ENCODE measurements at regions of chr18 and their contacts with region 1.

Region 1: GRCh38 chr18:21444465-21445023 is 156.0 kb downstream of the ESCO1 start:
- DNase-seq: peak; percentile 18
- ATAC-seq: no peak
- H3K4me3 Mint-ChIP-seq: no peak overlapping the region
- H3K27ac Mint-ChIP-seq: no peak overlapping the region
- H3K4me1 Mint-ChIP-seq: no peaks in the 10 kb centered on the region
- H3K27me3 Mint-ChIP-seq: peaks cover 14% of the 10 kb centered on the region

Region 2: DNA sequence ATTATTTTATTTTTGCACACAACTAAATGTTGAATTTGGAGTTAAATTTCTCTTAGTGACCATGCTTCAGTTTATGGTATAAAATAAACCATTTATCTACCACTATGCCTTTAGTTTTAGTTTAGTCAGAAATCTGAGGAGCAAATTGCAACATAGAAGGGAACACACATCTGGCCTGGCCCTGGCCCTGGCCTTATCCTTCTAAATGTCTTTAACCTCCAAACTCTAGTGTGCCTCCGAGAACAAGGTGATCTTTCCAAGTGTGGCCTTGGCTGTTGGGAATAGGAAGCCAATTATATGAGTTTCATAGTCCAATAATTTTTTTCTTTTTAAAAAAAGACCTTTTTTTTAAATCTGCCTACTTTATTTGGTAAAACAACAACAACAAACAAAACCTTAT is 234.3 kb before region 1 on chr18:
- CTCF ChIA-PET with region 1: interaction called, 5 read pairs
- POLR2A ChIA-PET with region 1: no interaction called
- intact Hi-C with region 1: loop called in 1 of 2 experiments (anchors 5 kb)
- DNase-seq: no peak
- ATAC-seq: no peak
- H3K4me3 Mint-ChIP-seq: no peak overlapping the region
- H3K27ac Mint-ChIP-seq: no peak overlapping the region
- H3K4me1 Mint-ChIP-seq: no peaks in the 10 kb centered on the region
- H3K27me3 Mint-ChIP-seq: no peaks in the 10 kb centered on the region

Region 3: GRCh38 chr18:21330122-21330701 is 114.3 kb before region 1 on chr18:
- CTCF ChIA-PET with region 1: no interaction called
- POLR2A ChIA-PET with region 1: no interaction called
- intact Hi-C with region 1: loop called in 1 of 2 experiments (anchors 10 kb)
- DNase-seq: no peak
- ATAC-seq: no peak
- H3K4me3 Mint-ChIP-seq: no peak overlapping the region
- H3K27ac Mint-ChIP-seq: no peak overlapping the region
- H3K4me1 Mint-ChIP-seq: no peaks in the 10 kb centered on the region
- H3K27me3 Mint-ChIP-seq: peaks cover 4% of the 10 kb centered on the region

Region 4: DNA sequence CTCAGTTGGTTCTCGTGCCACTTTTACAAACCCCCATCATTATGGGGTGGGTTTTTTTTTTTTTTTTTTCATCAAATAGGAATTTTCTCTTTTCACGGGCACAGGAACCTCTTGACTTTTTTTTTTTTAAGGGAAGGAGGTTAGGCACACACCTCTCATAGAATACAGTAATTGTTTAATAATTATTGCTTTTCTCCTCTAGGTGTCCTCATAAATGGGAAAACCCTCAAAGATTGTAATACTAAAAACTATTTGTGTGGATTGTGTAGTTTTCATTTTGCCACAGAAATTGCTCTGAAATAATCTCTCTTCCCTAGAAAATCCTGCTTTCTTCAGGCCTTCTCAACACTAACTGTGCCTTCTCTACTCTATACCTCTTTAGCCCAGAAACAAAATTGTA is 55.3 kb before region 1 on chr18:
- CTCF ChIA-PET with region 1: no interaction called
- POLR2A ChIA-PET with region 1: no interaction called
- intact Hi-C with region 1: loop called in 1 of 2 experiments (anchors 10 kb)
- DNase-seq: no peak
- ATAC-seq: no peak
- H3K4me3 Mint-ChIP-seq: no peak overlapping the region
- H3K27ac Mint-ChIP-seq: no peak overlapping the region
- H3K4me1 Mint-ChIP-seq: no peaks in the 10 kb centered on the region
- H3K27me3 Mint-ChIP-seq: peaks cover 4% of the 10 kb centered on the region

Region 5: GRCh38 chr18:21496277-21496835 is 51.8 kb after region 1 on chr18:
- CTCF ChIA-PET with region 1: no interaction called
- POLR2A ChIA-PET with region 1: no interaction called
- intact Hi-C with region 1: loop called in 1 of 2 experiments (anchors 5 kb)
- DNase-seq: no peak
- ATAC-seq: no peak
- H3K4me3 Mint-ChIP-seq: no peak overlapping the region
- H3K27ac Mint-ChIP-seq: no peak overlapping the region
- H3K4me1 Mint-ChIP-seq: no peaks in the 10 kb centered on the region
- H3K27me3 Mint-ChIP-seq: no peaks in the 10 kb centered on the region

Region 6: DNA sequence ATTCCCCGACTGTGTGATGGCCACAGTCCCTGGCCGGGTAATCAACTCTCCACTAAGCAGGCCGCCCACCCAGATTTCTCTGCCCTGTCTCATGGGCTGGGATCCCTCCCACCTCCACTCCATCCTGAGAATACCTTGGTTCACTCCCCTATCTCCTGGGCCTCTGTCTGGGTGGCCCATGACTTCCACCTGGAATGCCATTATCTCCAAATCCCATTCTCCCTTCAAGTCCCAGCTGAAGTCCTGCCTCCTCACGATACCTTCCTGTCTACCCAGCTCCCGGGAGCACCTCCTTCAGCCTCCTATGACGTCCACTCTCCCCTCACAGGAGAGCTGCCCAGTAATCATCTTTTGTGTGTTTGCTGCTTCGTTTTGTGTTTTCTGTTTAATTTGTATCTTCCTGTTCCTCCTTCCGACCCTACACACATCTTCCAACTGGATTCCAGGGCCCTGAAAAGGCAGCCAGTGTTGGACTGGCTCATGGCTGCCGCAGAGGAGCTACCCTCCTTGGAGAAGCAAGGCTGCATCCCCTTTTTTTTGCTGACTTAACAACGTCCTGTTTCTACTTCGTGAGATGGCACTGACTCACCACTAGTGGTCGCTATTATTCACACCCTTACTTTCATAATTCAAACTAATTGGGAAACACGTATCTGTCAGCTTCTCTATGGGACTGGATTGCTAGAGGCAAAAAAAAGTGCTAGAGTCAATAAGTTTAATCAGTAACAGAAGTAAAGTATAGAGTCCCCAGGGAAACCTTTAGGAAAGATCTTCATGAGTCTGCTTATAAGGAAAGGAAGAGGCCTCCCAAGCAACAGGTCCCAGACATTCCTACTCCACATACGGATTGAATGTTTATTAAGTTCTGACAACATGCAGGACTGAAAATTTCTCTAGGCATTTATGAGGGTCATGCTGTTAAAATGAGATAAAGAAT is 552.9 kb after region 1 on chr18:
- CTCF ChIA-PET with region 1: no interaction called
- POLR2A ChIA-PET with region 1: no interaction called
- intact Hi-C with region 1: no loop called
- DNase-seq: no peak
- ATAC-seq: peak; percentile 47
- H3K4me3 Mint-ChIP-seq: no peak overlapping the region
- H3K27ac Mint-ChIP-seq: no peak overlapping the region
- H3K4me1 Mint-ChIP-seq: peaks cover 3% of the 10 kb centered on the region
- H3K27me3 Mint-ChIP-seq: no peaks in the 10 kb centered on the region

Measured in activated CD4-positive, alpha-beta T cell treated with anti-CD3 and anti-CD28 coated beads for 36 hours (primary cell).